Pancreas (tissue), 10 donors: ENCODE measurements at regions of chr14 and their contacts with region 1.

Region 1: GRCh38 chr14:63663430-63664341 is 22.0 kb upstream of the WDR89 start:
- DNase-seq: peak in 5 of 6 donors; percentile 56 to 81 (median 66)
- ATAC-seq: peak; percentile 80 to 89 (median 84)
- H3K4me3 ChIP-seq: no peak overlapping the region
- H3K27ac ChIP-seq: no peak overlapping the region
- H3K4me1 ChIP-seq: peaks cover 4 to 9% (median 6%) of the 10 kb centered on the region in 3 donors
- H3K27me3 ChIP-seq: no peaks in the 10 kb centered on the region
- CTCF ChIP-seq: no peak

Region 2: DNA sequence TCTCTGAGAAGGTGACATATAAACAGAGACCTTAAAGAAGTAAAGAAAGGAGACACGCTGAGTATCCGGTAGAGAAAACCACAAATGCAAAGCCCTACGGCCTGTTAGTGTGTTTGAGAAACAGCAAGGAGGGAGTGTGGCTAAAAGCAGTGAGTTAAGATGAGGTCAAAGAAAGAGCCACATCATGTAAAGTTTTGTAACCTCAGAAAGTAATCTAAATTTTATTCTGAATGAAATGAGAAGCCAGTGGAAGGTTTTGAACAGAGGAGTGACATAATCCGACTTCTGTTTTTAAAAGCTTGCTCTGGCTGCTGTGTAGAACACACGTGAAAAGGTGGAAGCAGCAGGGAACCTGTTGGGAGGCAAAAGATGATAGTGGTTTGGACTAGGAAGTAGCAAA is 153.1 kb before region 1 on chr14:
- intact Hi-C with region 1: no loop called
- DNase-seq: no peak
- ATAC-seq: no peak
- H3K4me3 ChIP-seq: no peak overlapping the region
- H3K27ac ChIP-seq: no peak overlapping the region
- H3K4me1 ChIP-seq: peaks cover 0 to 12% (median 10%) of the 10 kb centered on the region in 3 donors
- H3K27me3 ChIP-seq: no peaks in the 10 kb centered on the region
- CTCF ChIP-seq: no peak

Region 3: DNA sequence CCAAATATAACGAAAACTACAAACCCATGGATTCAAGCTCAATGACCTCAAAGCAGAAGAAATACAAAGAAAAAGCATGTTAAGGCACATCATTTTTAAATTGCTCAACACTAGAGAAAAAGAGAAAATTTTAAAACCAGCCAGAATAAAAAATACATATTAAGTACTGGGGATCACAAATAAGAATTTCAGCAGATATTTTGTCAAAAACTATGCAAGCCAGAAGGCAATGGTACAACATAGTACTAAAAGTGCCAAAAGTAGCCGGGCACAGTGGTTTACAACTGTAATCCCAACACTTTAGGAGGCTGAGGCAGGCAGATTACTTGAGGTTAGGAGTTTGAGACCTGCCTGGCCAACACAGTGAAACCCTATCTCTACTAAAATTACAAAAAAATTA is 54.0 kb after region 1 on chr14:
- intact Hi-C with region 1: loop called in 1 of 3 experiments (anchors 10 kb)
- DNase-seq: no peak
- ATAC-seq: peak in 2 of 4 donors; percentile 38 to 67
- H3K4me3 ChIP-seq: no peak overlapping the region
- H3K27ac ChIP-seq: no peak overlapping the region
- H3K4me1 ChIP-seq: no peaks in the 10 kb centered on the region
- H3K27me3 ChIP-seq: no peaks in the 10 kb centered on the region
- CTCF ChIP-seq: no peak

Region 4: GRCh38 chr14:63770187-63770807 is 106.6 kb after region 1 on chr14:
- intact Hi-C with region 1: loop called in 1 of 3 experiments (anchors 10 kb)
- DNase-seq: peak in 2 of 6 donors; percentile 35 to 48
- ATAC-seq: peak; percentile 77 to 95 (median 90)
- H3K4me3 ChIP-seq: no peak overlapping the region
- H3K27ac ChIP-seq: no peak overlapping the region
- H3K4me1 ChIP-seq: no peaks in the 10 kb centered on the region
- H3K27me3 ChIP-seq: no peaks in the 10 kb centered on the region
- CTCF ChIP-seq: peak; percentile 13 to 50 (median 46)